ENCODE measurements at regions of chr19 and their contacts with region 1.

Region 1: GRCh38 chr19:14354445-14354844 is 26.8 kb upstream of the ADGRE5 start:
- DNase-seq: peak in 1 of 2 donors; percentile 42
- ATAC-seq: no peak
- H3K4me3 ChIP-seq: no peak overlapping the region
- H3K4me3 Mint-ChIP-seq: no peak overlapping the region
- H3K27ac ChIP-seq: peak overlapping the region; percentile 5
- H3K27ac Mint-ChIP-seq: peak overlapping the region; percentile 74 to 99
- H3K4me1 ChIP-seq: peaks cover 53% of the 10 kb centered on the region
- H3K4me1 Mint-ChIP-seq: peaks cover 33 to 36% of the 10 kb centered on the region in 2 donors
- H3K27me3 ChIP-seq: no peaks in the 10 kb centered on the region
- H3K27me3 Mint-ChIP-seq: no peaks in the 10 kb centered on the region
- CTCF ChIP-seq: no peak

Region 2: DNA sequence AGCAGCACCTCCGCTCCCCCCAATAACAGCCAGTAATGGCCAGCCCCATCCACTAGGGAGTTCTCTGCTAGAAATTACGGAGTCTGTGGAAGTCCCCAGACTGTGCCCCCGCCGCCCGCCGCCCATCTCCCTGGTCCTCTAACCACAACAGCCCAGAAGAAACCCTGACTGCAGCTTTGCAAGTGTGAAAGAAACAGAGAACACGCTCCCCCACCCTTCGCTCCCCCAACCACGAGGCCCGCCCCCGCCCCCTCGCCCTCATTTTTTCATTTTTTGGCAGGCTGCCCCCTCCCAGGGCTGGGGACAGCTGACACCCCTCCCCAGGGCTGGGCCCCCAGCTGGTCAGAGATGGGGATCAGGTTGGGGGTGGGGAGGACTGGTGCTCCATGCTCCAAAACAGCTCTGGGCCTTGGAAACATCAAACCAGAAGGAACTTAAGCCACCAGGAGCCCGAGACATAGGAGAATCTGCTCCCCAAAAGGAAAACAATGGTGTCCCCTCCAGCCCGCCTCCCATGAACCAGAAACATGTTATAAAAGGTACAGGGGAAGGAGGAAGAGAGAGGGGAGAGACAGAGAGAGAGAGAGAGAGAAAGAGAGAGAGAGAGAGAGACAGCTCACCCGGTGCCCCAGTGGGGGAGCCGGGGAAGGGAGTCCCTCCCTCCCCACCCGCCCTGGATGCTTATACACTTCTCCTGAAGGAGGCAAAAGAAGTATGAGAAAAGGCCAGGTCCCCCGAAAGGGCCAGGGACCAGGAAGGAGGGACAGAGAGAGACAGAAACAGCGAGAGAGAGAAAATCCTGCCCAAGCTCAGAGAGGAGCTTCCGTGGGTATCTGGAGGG is 188.2 kb before region 1 on chr19:
- intact Hi-C with region 1: no loop called
- DNase-seq: peak; percentile 46 to 47
- ATAC-seq: peak; percentile 66 to 74 (median 71)
- H3K4me3 ChIP-seq: peak overlapping the region; percentile 20
- H3K4me3 Mint-ChIP-seq: peak overlapping the region; percentile 89
- H3K27ac ChIP-seq: peak overlapping the region; percentile 79
- H3K27ac Mint-ChIP-seq: peak overlapping the region; percentile 85 to 95
- H3K4me1 ChIP-seq: peaks cover 38% of the 10 kb centered on the region
- H3K4me1 Mint-ChIP-seq: peaks cover 26 to 40% of the 10 kb centered on the region in 2 donors
- H3K27me3 ChIP-seq: no peaks in the 10 kb centered on the region
- H3K27me3 Mint-ChIP-seq: no peaks in the 10 kb centered on the region
- CTCF ChIP-seq: no peak

Region 3: DNA sequence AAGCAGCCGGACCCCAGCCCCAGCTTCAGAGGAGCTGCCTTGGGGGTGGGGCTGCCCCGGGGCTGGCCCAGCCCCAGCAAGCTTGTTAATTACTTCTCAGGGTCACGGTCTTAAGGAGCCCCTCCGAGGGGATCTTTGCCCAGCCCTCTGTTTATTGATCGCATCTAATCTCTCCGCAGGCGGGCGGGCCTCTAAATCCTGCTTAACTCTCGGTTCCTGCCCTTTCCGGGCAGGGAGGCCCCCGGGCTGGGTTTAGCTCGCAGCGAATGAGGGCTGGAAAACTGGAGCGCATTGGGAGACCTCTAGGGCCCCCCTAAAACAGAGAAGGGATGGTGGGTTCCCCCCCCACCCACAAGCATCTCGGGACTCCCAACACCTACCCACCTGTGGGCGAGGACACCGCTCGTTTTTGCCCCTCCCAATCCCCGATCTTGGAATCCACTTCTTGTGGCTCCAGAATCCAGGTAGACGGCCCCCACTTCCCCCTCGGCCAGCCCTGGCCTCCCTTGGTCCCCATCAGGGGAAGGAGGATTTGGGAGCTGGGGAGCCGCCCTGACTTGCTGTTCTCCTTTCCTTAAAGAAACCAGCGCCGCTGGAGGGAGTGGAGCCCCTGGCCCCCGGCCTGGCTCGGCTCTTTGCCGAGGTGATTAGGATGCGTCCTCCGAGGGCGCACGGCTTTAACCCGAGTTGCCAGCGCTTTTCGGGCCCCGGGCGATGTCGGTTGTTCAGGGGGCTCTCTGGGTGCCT is 89.0 kb before region 1 on chr19:
- intact Hi-C with region 1: no loop called
- DNase-seq: no peak
- ATAC-seq: no peak
- H3K4me3 ChIP-seq: no peak overlapping the region
- H3K4me3 Mint-ChIP-seq: no peak overlapping the region
- H3K27ac ChIP-seq: no peak overlapping the region
- H3K27ac Mint-ChIP-seq: no peak overlapping the region
- H3K4me1 ChIP-seq: no peaks in the 10 kb centered on the region
- H3K4me1 Mint-ChIP-seq: no peaks in the 10 kb centered on the region
- H3K27me3 ChIP-seq: peaks cover 6% of the 10 kb centered on the region
- H3K27me3 Mint-ChIP-seq: peaks cover 0 to 4% of the 10 kb centered on the region in 2 donors
- CTCF ChIP-seq: no peak

Region 4: GRCh38 chr19:14300303-14300702 is 54.1 kb before region 1 on chr19:
- intact Hi-C with region 1: loop called (anchors 10 kb)
- DNase-seq: no peak
- ATAC-seq: no peak
- H3K4me3 ChIP-seq: no peak overlapping the region
- H3K4me3 Mint-ChIP-seq: no peak overlapping the region
- H3K27ac ChIP-seq: no peak overlapping the region
- H3K27ac Mint-ChIP-seq: no peak overlapping the region
- H3K4me1 ChIP-seq: no peaks in the 10 kb centered on the region
- H3K4me1 Mint-ChIP-seq: no peaks in the 10 kb centered on the region
- H3K27me3 ChIP-seq: no peaks in the 10 kb centered on the region
- H3K27me3 Mint-ChIP-seq: no peaks in the 10 kb centered on the region
- CTCF ChIP-seq: no peak

Region 5: DNA sequence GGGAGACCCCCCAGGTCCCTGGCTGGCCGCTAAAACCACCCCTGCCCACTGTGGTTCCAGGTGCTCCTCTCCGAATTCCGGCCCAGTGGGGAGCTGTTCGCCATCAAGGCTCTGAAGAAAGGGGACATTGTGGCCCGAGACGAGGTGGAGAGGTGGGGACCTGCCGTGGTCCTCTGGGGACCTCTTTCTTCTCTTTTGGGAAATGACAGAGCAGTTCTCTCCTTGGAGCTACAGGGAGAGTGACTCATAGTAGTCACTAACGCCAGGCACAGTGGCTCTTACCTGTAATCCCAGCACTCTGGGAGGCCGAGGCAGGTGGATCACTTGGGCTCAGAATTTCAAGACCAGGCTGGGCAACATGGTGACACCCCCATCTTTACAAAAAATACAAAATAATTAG is 113.4 kb after region 1 on chr19:
- intact Hi-C with region 1: no loop called
- DNase-seq: no peak
- ATAC-seq: no peak
- H3K4me3 ChIP-seq: no peak overlapping the region
- H3K4me3 Mint-ChIP-seq: no peak overlapping the region
- H3K27ac ChIP-seq: no peak overlapping the region
- H3K27ac Mint-ChIP-seq: peak overlapping the region in 1 of 2 donors; percentile 22
- H3K4me1 ChIP-seq: peaks cover 13% of the 10 kb centered on the region
- H3K4me1 Mint-ChIP-seq: peaks cover 8 to 13% of the 10 kb centered on the region in 2 donors
- H3K27me3 ChIP-seq: no peaks in the 10 kb centered on the region
- H3K27me3 Mint-ChIP-seq: peaks cover 0 to 3% of the 10 kb centered on the region in 2 donors
- CTCF ChIP-seq: no peak

Measured in natural killer cell (primary cell).